Motor neuron (in vitro differentiated cells): ENCODE measurements at regions of chr3 and their contacts with region 1.

Region 1: DNA sequence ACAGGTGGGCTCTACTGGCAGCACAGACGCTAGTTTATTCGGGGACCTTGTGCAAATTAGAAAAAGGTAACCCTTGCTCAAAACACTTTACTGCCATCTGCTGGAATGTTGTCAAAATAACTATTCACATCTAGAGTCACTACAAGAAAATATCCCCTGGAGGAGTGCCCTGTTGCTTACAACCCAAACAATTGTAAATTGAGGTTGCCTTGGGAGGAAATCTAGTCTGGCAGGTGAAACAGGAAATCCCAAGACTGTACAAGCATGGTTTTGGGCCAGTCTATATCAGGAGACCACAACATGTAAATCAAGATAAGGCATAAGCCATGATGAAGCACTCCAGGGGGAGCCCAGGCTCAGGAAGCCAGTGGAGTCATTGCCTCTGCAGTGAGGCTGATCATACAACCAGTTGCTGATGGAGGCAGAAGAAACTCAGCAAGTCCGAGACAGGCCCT is 136.8 kb upstream of the ACP3 start:
- ATAC-seq: peak in 6 of 8 experiments; percentile 38 to 87 (median 72)
- H3K4me3 ChIP-seq: no peak overlapping the region
- H3K27ac ChIP-seq: no peak overlapping the region
- H3K4me1 ChIP-seq: no peaks in the 10 kb centered on the region

Region 2: DNA sequence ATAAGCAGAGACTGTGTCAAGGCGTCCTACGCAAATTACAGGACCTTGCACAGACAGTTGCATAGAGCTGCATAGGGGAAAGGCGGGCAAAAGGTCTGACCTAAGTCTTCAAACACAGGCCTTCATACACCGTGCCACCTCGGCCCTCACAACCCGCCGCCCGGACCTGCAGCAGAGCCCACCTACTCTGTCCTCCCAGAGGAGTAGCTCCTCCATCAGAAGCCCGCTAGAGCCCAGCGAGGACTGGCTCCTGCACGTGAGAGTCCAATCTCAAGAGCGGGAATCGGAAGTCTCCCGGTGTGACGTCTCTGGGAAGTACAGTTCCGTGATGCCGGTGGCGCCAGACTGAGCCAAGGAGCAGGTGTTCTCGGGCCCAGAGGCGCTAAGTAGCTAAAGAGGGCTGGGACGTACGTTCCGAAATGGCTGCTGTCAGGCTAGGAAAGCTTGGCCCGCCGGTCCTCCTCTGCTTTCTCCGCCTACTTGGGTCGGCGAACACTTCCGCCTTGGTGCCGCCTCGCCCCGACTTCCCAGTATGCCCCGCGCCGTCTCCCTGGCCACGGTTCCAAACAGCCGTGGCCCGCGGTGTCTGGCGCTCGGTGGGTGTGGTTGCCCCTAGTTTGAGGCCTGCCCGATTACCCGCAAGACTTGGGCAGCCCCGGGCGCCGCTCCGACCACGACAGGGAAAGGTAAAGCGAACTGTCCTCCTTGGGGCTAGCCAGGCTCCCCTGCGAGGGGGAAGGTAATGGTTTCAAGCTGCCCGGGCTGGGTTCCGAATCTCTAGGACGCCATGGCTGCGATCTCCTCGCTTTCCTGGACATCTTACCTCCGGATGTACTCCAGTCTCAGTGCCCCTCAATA is 1153.8 kb before region 1 on chr3 and contains the starts of genes ASTE1 and NEK11:
- in situ Hi-C with region 1: loop called in 1 of 9 experiments (anchors 25 kb)
- ATAC-seq: peak; percentile 86 to 98 (median 96)
- H3K4me3 ChIP-seq: peak within 1 kb of the TSS; percentile 28 to 41 (median 33)
- H3K27ac ChIP-seq: peak within 1 kb of the TSS in 1 of 2 donors; percentile 29
- H3K4me1 ChIP-seq: no peaks in the 10 kb centered on the region
- total RNA-seq, gene ASTE1: 1.1 to 7.5 (median 3.5) TPM
- total RNA-seq, gene NEK11: 1.1 to 10.3 (median 3.4) TPM

Region 3: GRCh38 chr3:131526801-131527347 is 653.5 kb before region 1 on chr3:
- in situ Hi-C with region 1: loop called in 1 of 9 experiments (anchors 25 kb)
- ATAC-seq: peak; percentile 33 to 100 (median 64)
- H3K4me3 ChIP-seq: no peak overlapping the region
- H3K27ac ChIP-seq: no peak overlapping the region
- H3K4me1 ChIP-seq: no peaks in the 10 kb centered on the region

Region 4: GRCh38 chr3:131794766-131795388 is 385.5 kb before region 1 on chr3:
- in situ Hi-C with region 1: loop called in 2 of 9 experiments (anchors 25 kb)
- ATAC-seq: peak; percentile 58 to 86 (median 73)
- H3K4me3 ChIP-seq: no peak overlapping the region
- H3K27ac ChIP-seq: no peak overlapping the region
- H3K4me1 ChIP-seq: peaks cover 18 to 28% of the 10 kb centered on the region in 2 donors

Region 5: DNA sequence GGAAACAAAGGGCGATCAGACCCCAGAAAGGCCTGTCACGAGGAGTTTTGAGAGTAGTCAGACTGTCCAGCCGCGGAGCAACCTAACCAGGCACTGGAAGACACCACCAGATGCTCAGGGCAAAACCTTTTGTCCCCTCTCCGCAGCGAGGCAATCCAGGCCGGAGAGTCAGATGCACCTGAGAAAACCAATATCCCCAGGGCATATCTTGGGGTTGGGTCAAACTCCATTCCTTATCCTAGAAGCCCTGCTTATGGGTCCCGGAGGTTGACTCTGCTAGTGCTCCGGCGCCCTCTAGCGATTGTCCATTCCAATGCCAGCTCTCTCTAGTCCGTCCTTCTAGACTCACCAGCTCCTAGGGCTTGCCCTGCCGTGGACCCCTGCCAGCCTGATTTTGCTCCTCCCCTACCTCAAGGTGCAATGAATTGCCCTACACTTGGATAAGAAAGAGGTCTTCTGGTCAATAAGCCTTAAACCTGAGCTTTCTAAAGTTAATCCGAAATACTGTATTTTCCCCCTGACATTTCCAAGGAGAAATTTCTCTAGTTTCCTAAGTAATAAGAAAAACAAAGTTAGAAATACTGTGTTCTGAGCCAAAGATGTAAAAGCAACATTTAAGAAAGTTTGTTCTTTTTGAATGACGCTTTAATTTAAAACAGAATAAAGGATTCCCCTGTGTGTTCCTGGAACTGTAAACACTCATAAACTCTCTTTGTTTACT is 151.0 kb before region 1 on chr3:
- in situ Hi-C with region 1: loop called in 2 of 9 experiments (anchors 10 to 25 kb)
- ATAC-seq: peak; percentile 99 to 100 (median 100)
- H3K4me3 ChIP-seq: no peak overlapping the region
- H3K27ac ChIP-seq: no peak overlapping the region
- H3K4me1 ChIP-seq: peaks cover 0 to 4% of the 10 kb centered on the region in 2 donors

Region 6: GRCh38 chr3:132034486-132035464 is 145.6 kb before region 1 on chr3 and contains the start of gene CPNE4:
- in situ Hi-C with region 1: loop called in 2 of 9 experiments (anchors 10 to 25 kb)
- ATAC-seq: peak; percentile 97 to 100 (median 99)
- H3K4me3 ChIP-seq: peak within 1 kb of the TSS; percentile 36 to 48 (median 40)
- H3K27ac ChIP-seq: no peak within 1 kb of the TSS
- H3K4me1 ChIP-seq: peaks cover 0 to 2% of the 10 kb centered on the region in 2 donors
- total RNA-seq, gene CPNE4: 0.35 to 4.8 (median 1.5) TPM

Region 7: GRCh38 chr3:132047209-132047608 is 133.2 kb before region 1 on chr3:
- in situ Hi-C with region 1: loop called in 3 of 9 experiments (anchors 10 to 25 kb)
- ATAC-seq: no peak
- H3K4me3 ChIP-seq: no peak overlapping the region
- H3K27ac ChIP-seq: no peak overlapping the region
- H3K4me1 ChIP-seq: no peaks in the 10 kb centered on the region